Colonic mucosa (tissue), 4 donors: ENCODE measurements at regions of chr18 and their contacts with region 1.

Region 1: DNA sequence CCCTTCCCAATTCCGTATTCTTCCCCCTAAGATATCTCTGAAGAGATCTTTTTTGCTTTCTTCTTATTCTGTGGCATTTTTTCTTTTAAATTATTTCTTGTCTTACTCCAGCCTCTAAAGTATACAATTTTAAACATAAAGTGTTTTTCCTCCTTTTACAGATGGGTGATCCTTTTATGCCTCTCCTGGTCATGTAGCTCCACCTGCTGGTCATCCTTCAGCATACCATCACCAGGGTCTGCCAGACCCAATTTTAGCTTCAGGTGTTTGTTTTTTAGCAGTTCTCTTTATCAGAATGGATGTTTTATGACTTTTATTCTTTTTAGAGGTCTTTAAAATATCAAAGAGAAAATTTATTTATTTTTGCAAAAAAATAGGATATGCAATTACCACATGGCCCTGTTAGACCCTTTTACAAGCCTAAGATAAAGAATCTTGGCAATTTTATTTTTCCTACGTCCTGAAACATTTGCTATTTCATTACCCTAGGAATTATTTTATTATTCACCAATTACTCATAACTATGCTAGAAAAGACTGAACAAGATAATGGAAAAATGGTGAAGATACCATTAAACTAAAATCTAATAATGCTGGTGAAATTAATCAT is 55.5 kb downstream of the PIGN start:
- DNase-seq: peak; percentile 65
- H3K4me3 ChIP-seq: no peak overlapping the region
- H3K27ac ChIP-seq: no peak overlapping the region
- H3K4me1 ChIP-seq: no peaks in the 10 kb centered on the region
- H3K27me3 ChIP-seq: no peaks in the 10 kb centered on the region
- CTCF ChIP-seq: peak; percentile 95

Region 2: DNA sequence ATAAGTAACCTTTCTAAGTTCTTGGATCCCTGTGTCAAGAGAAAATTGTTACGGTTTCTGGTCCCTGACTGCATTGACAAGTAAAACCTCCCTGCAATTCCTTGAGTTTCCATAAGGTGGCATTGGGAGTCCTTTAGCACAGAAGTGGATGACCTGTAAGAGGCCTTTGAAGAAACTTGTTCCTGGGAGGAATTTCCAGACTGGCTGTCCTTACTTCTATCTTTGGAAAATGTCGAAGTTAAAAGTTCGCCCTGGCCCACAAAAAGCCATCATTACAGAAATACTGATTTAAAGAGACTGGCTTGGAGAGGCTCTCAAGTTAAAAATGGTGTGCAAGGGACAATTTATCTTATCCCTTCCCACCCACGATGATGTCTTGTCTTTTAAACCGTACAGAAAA is 579.8 kb before region 1 on chr18:
- intact Hi-C with region 1: loop called (anchors 2 kb)
- DNase-seq: peak; percentile 68
- H3K4me3 ChIP-seq: no peak overlapping the region
- H3K27ac ChIP-seq: no peak overlapping the region
- H3K4me1 ChIP-seq: no peaks in the 10 kb centered on the region
- H3K27me3 ChIP-seq: no peaks in the 10 kb centered on the region
- CTCF ChIP-seq: peak; percentile 84

Region 3: GRCh38 chr18:61575419-61575818 is 556.0 kb before region 1 on chr18:
- intact Hi-C with region 1: loop called (anchors 10 kb)
- DNase-seq: no peak
- H3K4me3 ChIP-seq: no peak overlapping the region
- H3K27ac ChIP-seq: no peak overlapping the region
- H3K4me1 ChIP-seq: no peaks in the 10 kb centered on the region
- H3K27me3 ChIP-seq: no peaks in the 10 kb centered on the region
- CTCF ChIP-seq: no peak

Region 4: DNA sequence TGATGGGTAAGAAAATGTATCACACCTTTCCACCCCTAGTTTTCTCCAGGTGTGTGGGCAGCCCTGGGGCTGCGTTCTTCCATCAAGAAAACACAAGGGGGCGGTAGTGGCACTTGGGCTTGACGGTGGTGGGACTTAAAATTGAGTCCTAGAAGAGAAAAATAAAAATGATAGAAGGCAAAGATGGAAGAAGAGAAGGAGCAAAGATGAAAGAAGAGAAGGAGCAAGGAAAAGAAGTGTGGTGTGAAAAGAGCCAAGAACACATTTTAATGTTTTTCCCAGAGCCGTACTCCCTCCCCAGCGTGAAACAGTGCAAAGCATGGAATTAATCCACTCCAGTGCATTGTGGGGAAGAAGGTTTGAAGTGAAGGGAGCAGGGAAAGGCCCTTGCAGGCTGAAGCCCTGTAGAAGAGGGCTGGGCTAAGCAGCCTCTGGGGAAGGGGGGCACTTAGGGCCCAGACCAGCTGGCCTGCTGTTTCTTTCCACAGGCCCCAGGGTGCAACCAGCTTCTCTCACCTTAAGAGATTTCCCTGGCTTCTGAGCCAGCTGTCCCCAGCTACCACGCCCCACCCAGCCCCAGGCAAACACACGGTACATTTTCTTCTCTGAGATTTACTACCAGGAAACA is 495.4 kb before region 1 on chr18:
- intact Hi-C with region 1: loop called (anchors 5 kb)
- DNase-seq: peak; percentile 86
- H3K4me3 ChIP-seq: no peak overlapping the region
- H3K27ac ChIP-seq: peak overlapping the region; percentile 86
- H3K4me1 ChIP-seq: peaks cover 13% of the 10 kb centered on the region
- H3K27me3 ChIP-seq: no peaks in the 10 kb centered on the region
- CTCF ChIP-seq: peak; percentile 78

Region 5: GRCh38 chr18:61901323-61901986 is 229.9 kb before region 1 on chr18:
- intact Hi-C with region 1: loop called (anchors 10 kb)
- DNase-seq: peak; percentile 56
- H3K4me3 ChIP-seq: no peak overlapping the region
- H3K27ac ChIP-seq: no peak overlapping the region
- H3K4me1 ChIP-seq: no peaks in the 10 kb centered on the region
- H3K27me3 ChIP-seq: no peaks in the 10 kb centered on the region
- CTCF ChIP-seq: peak; percentile 93